Mammary epithelial cell (primary cell): ENCODE measurements at regions of chr5 and their contacts with region 1.

Region 1: DNA sequence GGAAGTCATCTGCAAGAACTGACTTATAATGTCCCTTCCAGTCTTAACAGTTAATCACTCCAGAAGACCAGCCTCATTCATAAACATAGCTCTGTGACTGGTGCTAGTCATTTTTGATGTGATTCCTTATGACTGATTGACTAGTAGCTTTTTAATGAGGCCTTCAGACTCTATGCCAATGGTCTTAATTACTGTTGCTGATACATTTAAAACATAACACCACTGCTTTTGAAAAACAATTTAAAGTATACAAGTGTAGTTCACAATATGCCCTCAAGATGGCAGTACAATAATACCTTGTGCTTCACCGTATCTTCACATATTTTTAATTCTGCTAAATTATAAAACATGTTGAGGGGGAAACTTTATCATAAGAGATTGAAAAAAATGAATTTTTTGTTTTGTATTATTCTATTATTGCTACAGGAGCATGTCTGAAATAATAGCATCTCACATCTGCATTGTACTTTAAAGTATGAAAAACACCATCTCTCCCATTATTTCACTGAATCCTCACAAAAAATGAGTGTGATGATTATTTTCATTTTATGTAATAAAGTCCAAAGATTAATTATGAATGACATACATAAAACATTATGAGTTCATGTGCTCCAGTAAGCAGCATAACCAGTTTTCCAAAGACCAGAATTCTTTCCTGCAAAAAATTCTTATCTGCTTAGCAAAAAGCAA is 55.2 kb upstream of the SHISAL2B start:
- DNase-seq: peak; percentile 14
- H3K4me3 ChIP-seq: no peak overlapping the region
- H3K27ac ChIP-seq: no peak overlapping the region
- H3K4me1 ChIP-seq: no peaks in the 10 kb centered on the region
- H3K27me3 ChIP-seq: no peaks in the 10 kb centered on the region
- CTCF ChIP-seq: peak; percentile 66 to 69

Region 2: GRCh38 chr5:64768358-64769312 is 133.5 kb after region 1 on chr5 and contains the starts of genes CWC27 and SREK1IP1:
- CTCF ChIA-PET with region 1: no interaction called
- dilution Hi-C with region 1: loop called (anchors 10 kb)
- in situ Hi-C with region 1: loop called in 1 of 2 experiments (anchors 10 kb)
- intact Hi-C with region 1: loop called (anchors 5 kb)
- DNase-seq: peak; percentile 89
- H3K4me3 ChIP-seq: peak within 1 kb of the TSS; percentile 82 to 89 (median 86)
- H3K27ac ChIP-seq: peak within 1 kb of the TSS; percentile 96
- H3K4me1 ChIP-seq: peaks cover 40% of the 10 kb centered on the region
- H3K27me3 ChIP-seq: no peaks in the 10 kb centered on the region
- CTCF ChIP-seq: peak in 1 of 2 donors; percentile 34
- total RNA-seq, gene CWC27: 12.5 to 26.4 TPM
- total RNA-seq, gene SREK1IP1: 14.5 to 41.5 TPM

Region 3: DNA sequence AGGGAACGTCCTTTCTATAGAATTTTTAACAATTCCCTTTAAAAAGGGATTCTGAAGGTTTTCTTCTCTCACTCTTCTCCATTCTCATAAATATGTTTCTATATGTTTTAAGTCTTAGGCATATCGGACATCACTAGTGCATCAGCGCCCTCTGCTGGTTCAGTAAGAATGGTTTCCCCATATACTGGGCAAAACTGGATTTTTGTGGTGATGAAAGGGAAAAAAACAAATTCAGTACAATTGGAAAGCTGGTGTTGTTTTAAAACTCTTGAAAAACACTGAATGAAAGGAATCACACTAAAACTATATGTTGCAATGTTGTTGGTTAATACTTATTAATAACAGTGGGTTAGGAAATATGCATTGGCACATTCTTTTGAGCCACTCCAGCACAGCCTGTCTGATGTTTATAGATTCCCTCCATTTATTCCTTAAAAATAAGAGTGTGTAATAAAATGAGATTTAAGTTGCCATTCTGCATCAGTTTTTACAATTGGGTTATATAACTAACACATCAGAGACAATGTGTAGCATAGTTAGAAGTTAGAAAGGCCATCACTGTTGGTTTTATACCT is 149.4 kb after region 1 on chr5:
- CTCF ChIA-PET with region 1: no interaction called
- dilution Hi-C with region 1: no loop called
- in situ Hi-C with region 1: loop called in 1 of 2 experiments (anchors 5 kb)
- intact Hi-C with region 1: loop called (anchors 1 kb)
- DNase-seq: peak; percentile 55
- H3K4me3 ChIP-seq: no peak overlapping the region
- H3K27ac ChIP-seq: no peak overlapping the region
- H3K4me1 ChIP-seq: no peaks in the 10 kb centered on the region
- H3K27me3 ChIP-seq: no peaks in the 10 kb centered on the region
- CTCF ChIP-seq: peak; percentile 76 to 81